CD4-positive, alpha-beta memory T cell (primary cell): ENCODE measurements at regions of chr14 and their contacts with region 1.

Region 1: GRCh38 chr14:94136575-94137331 is 7.3 kb upstream of the IFI27L2 start:
- DNase-seq: peak; percentile 74 to 80 (median 77)
- H3K4me3 ChIP-seq: no peak overlapping the region
- H3K4me3 Mint-ChIP-seq: no peak overlapping the region
- H3K27ac ChIP-seq: no peak overlapping the region
- H3K27ac Mint-ChIP-seq: no peak overlapping the region
- H3K4me1 ChIP-seq: no peaks in the 10 kb centered on the region
- H3K4me1 Mint-ChIP-seq: peaks cover 0 to 10% (median 1%) of the 10 kb centered on the region in 4 donors
- H3K27me3 ChIP-seq: no peaks in the 10 kb centered on the region
- H3K27me3 Mint-ChIP-seq: peaks cover 1 to 3% of the 10 kb centered on the region in 2 donors

Region 2: GRCh38 chr14:94026173-94026888 is 110.4 kb before region 1 on chr14 and contains the start of gene OTUB2:
- CTCF ChIA-PET with region 1: interaction called, 16 read pairs
- POLR2A ChIA-PET with region 1: no interaction called
- intact Hi-C with region 1: no loop called
- DNase-seq: peak; percentile 96 to 97 (median 97)
- H3K4me3 ChIP-seq: peak within 1 kb of the TSS in 1 of 2 donors; percentile 56
- H3K4me3 Mint-ChIP-seq: peak within 1 kb of the TSS; percentile 81 to 88 (median 84)
- H3K27ac ChIP-seq: peak within 1 kb of the TSS; percentile 13
- H3K27ac Mint-ChIP-seq: peak within 1 kb of the TSS in 6 of 7 donors; percentile 42 to 89 (median 74)
- H3K4me1 ChIP-seq: peaks cover 45% of the 10 kb centered on the region
- H3K4me1 Mint-ChIP-seq: peaks cover 30 to 55% (median 42%) of the 10 kb centered on the region in 4 donors
- H3K27me3 ChIP-seq: no peaks in the 10 kb centered on the region
- H3K27me3 Mint-ChIP-seq: no peaks in the 10 kb centered on the region
- total RNA-seq, gene OTUB2: 0.42 to 0.67 TPM

Region 3: GRCh38 chr14:94161981-94162380 is 25.2 kb after region 1 on chr14:
- CTCF ChIA-PET with region 1: interaction called, 23 read pairs
- POLR2A ChIA-PET with region 1: interaction called, 6 read pairs
- intact Hi-C with region 1: loop called (anchors 1 kb)
- DNase-seq: no peak
- H3K4me3 ChIP-seq: no peak overlapping the region
- H3K4me3 Mint-ChIP-seq: peak overlapping the region in 6 of 8 donors; percentile 9 to 57 (median 20)
- H3K27ac ChIP-seq: no peak overlapping the region
- H3K27ac Mint-ChIP-seq: peak overlapping the region; percentile 9 to 89 (median 81)
- H3K4me1 ChIP-seq: peaks cover 74% of the 10 kb centered on the region
- H3K4me1 Mint-ChIP-seq: peaks cover 40 to 90% (median 68%) of the 10 kb centered on the region in 4 donors
- H3K27me3 ChIP-seq: no peaks in the 10 kb centered on the region
- H3K27me3 Mint-ChIP-seq: no peaks in the 10 kb centered on the region

Region 4: DNA sequence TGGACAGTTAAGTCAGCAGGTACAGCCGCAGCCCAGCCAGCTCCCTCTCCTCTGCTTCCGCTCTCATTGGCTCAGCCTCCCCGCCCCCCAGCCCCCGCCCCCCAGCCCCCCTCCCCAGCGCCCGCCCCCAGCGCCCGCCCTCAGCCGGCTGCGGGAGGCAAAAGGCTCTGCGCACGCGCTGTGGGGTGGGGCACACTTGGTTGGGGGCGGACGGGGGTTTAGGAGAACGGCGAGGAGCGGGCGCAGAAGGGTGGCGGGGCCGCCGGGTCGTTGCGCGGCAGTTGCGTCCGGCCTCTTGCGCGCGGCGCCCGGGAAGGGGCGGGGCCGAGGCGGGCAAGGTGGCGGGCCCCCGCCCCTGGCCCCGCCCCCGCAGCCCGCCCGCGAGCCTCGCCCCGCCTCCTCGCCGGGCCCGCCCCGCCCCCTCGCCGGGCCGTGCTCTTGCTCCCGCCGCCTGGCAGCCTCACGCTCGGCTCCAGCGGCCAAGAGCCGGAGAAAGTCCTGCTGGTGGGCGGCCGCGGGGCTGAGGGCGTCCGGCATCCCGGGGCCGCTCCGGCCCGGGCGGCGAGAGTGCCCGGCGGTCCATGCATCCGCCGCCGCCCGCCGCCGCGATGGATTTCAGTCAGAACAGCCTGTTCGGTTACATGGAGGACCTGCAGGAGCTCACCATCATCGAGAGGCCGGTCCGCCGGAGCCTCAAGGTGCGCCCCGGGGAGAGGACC is 37.3 kb after region 1 on chr14 and contains the start of gene PPP4R4:
- CTCF ChIA-PET with region 1: interaction called, 126 read pairs
- POLR2A ChIA-PET with region 1: interaction called, 12 read pairs
- intact Hi-C with region 1: no loop called
- DNase-seq: peak; percentile 85 to 93 (median 87)
- H3K4me3 ChIP-seq: peak within 1 kb of the TSS in 1 of 2 donors; percentile 60
- H3K4me3 Mint-ChIP-seq: peak within 1 kb of the TSS; percentile 83 to 91 (median 88)
- H3K27ac ChIP-seq: peak within 1 kb of the TSS; percentile 37
- H3K27ac Mint-ChIP-seq: peak within 1 kb of the TSS; percentile 63 to 91 (median 86)
- H3K4me1 ChIP-seq: peaks cover 6% of the 10 kb centered on the region
- H3K4me1 Mint-ChIP-seq: peaks cover 16 to 28% (median 21%) of the 10 kb centered on the region in 4 donors
- H3K27me3 ChIP-seq: peaks cover 3% of the 10 kb centered on the region
- H3K27me3 Mint-ChIP-seq: peaks cover 0 to 7% of the 10 kb centered on the region in 2 donors
- total RNA-seq, gene PPP4R4: 6.3 to 7.3 TPM

Region 5: DNA sequence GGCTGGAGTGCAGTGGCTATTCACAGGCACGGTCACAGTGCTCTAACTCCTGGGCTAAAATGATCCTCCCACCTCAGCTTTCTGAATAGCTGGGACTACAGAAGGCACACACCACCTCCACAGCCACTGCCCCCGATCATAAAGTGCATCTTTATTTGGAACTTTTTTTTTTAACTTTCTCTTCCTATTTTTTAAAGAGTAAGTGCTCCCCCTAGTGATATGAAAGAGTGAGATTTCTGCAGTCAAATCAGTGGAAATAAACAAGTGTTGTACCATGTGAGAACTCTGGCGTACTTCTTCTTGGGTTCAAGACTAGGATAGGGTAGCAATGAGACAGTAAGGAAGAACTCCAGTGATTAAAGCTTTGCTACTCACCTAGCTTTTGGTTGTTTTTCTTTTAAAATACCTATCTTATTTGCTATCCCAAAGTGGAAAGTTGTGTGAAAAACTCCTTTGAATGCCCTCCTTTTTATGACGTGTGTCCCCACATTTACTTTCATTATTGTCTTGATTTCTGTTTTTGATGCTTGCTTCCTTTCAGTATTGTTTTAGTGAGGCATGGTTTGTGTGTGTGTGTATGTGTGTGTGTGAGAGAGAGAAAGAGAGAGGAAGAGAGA is 44.0 kb after region 1 on chr14:
- CTCF ChIA-PET with region 1: interaction called, 126 read pairs
- POLR2A ChIA-PET with region 1: interaction called, 12 read pairs
- intact Hi-C with region 1: loop called (anchors 1 kb)
- DNase-seq: peak; percentile 68 to 81 (median 73)
- H3K4me3 ChIP-seq: peak overlapping the region in 1 of 2 donors; percentile 46
- H3K4me3 Mint-ChIP-seq: peak overlapping the region; percentile 2 to 79 (median 58)
- H3K27ac ChIP-seq: peak overlapping the region; percentile 29
- H3K27ac Mint-ChIP-seq: peak overlapping the region; percentile 18 to 91 (median 66)
- H3K4me1 ChIP-seq: peaks cover 10% of the 10 kb centered on the region
- H3K4me1 Mint-ChIP-seq: peaks cover 10 to 23% (median 16%) of the 10 kb centered on the region in 4 donors
- H3K27me3 ChIP-seq: peaks cover 2% of the 10 kb centered on the region
- H3K27me3 Mint-ChIP-seq: peaks cover 2 to 6% of the 10 kb centered on the region in 2 donors

Region 6: GRCh38 chr14:94192534-94192933 is 55.8 kb after region 1 on chr14:
- CTCF ChIA-PET with region 1: interaction called, 15 read pairs
- POLR2A ChIA-PET with region 1: no interaction called
- intact Hi-C with region 1: no loop called
- DNase-seq: no peak
- H3K4me3 ChIP-seq: no peak overlapping the region
- H3K4me3 Mint-ChIP-seq: no peak overlapping the region
- H3K27ac ChIP-seq: no peak overlapping the region
- H3K27ac Mint-ChIP-seq: no peak overlapping the region
- H3K4me1 ChIP-seq: no peaks in the 10 kb centered on the region
- H3K4me1 Mint-ChIP-seq: no peaks in the 10 kb centered on the region
- H3K27me3 ChIP-seq: no peaks in the 10 kb centered on the region
- H3K27me3 Mint-ChIP-seq: peaks cover 5 to 8% of the 10 kb centered on the region in 2 donors